SK-N-SH (cell line): ENCODE measurements at regions of chr5 and their contacts with region 1.

Region 1: DNA sequence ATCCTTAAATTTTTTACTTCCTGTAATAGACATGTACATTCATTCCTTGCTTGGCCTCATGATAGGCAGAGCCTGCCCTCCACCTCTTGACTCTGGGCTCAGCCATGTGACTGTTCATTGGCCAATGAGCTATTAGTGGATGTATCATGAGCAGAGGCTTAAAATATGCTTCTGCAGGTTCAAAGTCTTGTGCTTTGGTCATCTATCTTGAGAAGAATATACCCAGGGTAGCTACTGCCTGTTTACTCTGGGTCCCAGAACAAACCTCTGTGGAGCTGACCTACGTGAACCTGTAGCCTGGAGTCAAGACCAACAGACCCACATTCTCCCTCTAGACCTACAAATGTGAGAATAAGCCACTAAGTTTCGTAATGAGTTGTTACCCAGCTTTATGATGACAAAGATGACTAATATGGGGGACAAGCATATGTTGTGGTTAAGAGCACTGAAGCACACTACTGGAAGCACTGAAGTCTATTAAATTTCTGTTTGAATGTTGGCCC is 244.4 kb downstream of the MAST4 start:
- DNase-seq: no peak
- H3K4me3 ChIP-seq: no peak overlapping the region
- H3K27ac ChIP-seq: no peak overlapping the region
- H3K4me1 ChIP-seq: peaks cover 0 to 2% of the 10 kb centered on the region in 2 experiments; a peak in 2 of 4 replicates
- H3K27me3 ChIP-seq: no peaks in the 10 kb centered on the region
- CTCF ChIP-seq: no peak
- EP300 ChIP-seq: no peak
- RAD21 ChIP-seq: no peak

Region 2: DNA sequence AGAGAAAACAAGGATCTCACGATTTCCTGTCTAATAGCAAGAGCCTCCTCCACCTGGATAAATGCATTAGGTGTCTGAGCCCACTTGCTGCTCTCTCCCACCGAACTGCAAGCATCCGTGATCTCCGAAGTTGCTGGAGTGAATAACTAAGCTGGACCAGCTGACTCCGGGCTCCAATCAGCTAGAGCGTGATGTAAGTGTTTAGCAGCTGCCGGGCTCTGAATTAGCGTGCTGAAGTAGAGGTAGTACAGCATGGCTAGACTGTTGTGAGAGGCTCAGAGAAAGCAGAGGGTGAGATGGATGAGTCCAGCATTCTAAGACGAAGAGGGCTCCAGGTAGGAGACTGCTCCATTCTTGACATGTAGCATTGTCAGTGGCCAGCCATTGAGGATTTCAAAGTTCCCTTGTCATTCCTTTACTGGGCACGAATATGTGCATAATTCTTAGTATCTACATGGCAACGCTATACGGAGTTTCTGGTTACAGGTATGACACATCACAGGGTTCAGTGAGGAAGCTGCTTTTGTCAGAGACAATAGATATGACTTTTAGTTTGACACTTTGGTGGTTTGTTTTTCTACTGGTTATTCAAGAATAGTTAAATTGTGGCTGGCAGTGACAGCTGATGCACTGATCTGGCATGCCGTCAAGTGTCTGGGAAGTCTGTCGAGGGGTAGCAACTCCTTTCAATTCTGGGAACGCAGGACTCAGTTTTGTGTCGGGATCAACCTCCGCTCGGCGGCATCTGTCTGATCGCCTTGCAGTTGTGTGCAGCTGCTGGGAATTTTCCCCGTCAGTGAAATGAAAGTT is 11.8 kb before region 1 on chr5:
- CTCF ChIA-PET with region 1: interaction called, 11 read pairs
- POLR2A ChIA-PET with region 1: no interaction called
- DNase-seq: peak; percentile 39
- H3K4me3 ChIP-seq: peak overlapping the region; percentile 45 to 60
- H3K27ac ChIP-seq: no peak overlapping the region; a peak in 1 of 4 replicates
- H3K4me1 ChIP-seq: peaks cover 7 to 13% of the 10 kb centered on the region in 2 experiments; a peak in 3 of 4 replicates
- H3K27me3 ChIP-seq: peaks cover 5% of the 10 kb centered on the region; the same call in 1 of the 2 replicates
- CTCF ChIP-seq: no peak
- EP300 ChIP-seq: no peak
- RAD21 ChIP-seq: no peak

Region 3: GRCh38 chr5:66856041-66856805 is 15.7 kb after region 1 on chr5:
- CTCF ChIA-PET with region 1: no interaction called
- POLR2A ChIA-PET with region 1: no interaction called
- DNase-seq: no peak
- H3K4me3 ChIP-seq: no peak overlapping the region
- H3K27ac ChIP-seq: no peak overlapping the region
- H3K4me1 ChIP-seq: peaks cover 0 to 6% of the 10 kb centered on the region in 2 experiments; a peak in 2 of 4 replicates
- H3K27me3 ChIP-seq: no peaks in the 10 kb centered on the region
- CTCF ChIP-seq: no peak
- EP300 ChIP-seq: peak in 1 of 2 experiments; percentile 53; a peak in 1 of 4 replicates
- RAD21 ChIP-seq: no peak